Common myeloid progenitor, CD34-positive (primary cell): ENCODE measurements at regions of chr14 and their contacts with region 1.

Region 1: GRCh38 chr14:75361751-75362433 is 65.9 kb upstream of the JDP2 start:
- DNase-seq: peak in 2 of 3 donors; percentile 34 to 39
- H3K4me3 ChIP-seq: no peak overlapping the region
- H3K27ac ChIP-seq: no peak overlapping the region
- H3K4me1 ChIP-seq: peaks cover 3 to 20% (median 7%) of the 10 kb centered on the region in 4 experiments
- H3K27me3 ChIP-seq: no peaks in the 10 kb centered on the region

Region 2: GRCh38 chr14:74816124-74816523 is 545.8 kb before region 1 on chr14:
- CTCF ChIA-PET with region 1: no interaction called
- POLR2A ChIA-PET with region 1: no interaction called
- DNase-seq: no peak
- H3K4me3 ChIP-seq: no peak overlapping the region
- H3K27ac ChIP-seq: no peak overlapping the region
- H3K4me1 ChIP-seq: peaks cover 0 to 6% (median 0%) of the 10 kb centered on the region in 4 experiments
- H3K27me3 ChIP-seq: no peaks in the 10 kb centered on the region

Region 3: GRCh38 chr14:75176142-75176820 is 185.6 kb before region 1 on chr14 and contains the start of gene TMED10:
- CTCF ChIA-PET with region 1: no interaction called
- POLR2A ChIA-PET with region 1: no interaction called
- DNase-seq: peak; percentile 92 to 96 (median 96)
- H3K4me3 ChIP-seq: peak within 1 kb of the TSS; percentile 46 to 95 (median 89)
- H3K27ac ChIP-seq: peak within 1 kb of the TSS; percentile 99 to 100
- H3K4me1 ChIP-seq: peaks cover 0 to 19% (median 13%) of the 10 kb centered on the region in 4 experiments
- H3K27me3 ChIP-seq: no peaks in the 10 kb centered on the region

Region 4: DNA sequence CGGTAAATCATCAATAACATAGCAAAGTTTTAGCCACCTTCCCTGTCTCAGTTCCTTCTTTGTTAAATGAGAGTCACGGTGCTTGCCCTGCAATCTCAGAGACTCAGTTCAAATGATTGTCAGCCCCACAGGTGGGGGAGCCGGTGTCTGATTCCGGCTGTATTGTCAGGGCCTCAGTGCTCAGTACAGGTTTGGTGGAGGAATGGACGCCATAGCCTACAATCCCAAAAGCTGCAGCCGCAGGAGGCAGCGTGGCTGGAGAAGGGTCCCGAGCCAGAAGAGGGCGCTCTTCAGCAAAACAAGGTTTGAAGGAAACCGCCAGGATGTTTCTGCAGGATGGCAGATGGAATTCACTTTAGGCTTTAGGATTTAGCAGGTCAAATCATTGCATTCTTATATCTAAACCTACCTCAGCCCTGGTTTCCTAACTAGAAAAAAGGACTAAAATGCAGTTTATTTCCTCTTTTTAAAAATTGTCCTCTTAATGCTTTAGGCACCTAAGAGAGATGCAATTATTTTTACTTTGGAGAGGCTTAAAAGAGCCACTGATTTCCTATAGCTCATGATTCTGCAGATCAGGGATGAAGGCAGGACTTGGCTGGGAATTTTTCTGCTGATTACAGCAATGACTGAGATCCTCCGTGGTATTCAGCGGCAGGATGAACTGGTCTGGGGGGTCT is 54.1 kb before region 1 on chr14:
- CTCF ChIA-PET with region 1: no interaction called
- POLR2A ChIA-PET with region 1: no interaction called
- DNase-seq: peak; percentile 75 to 81 (median 75)
- H3K4me3 ChIP-seq: peak overlapping the region in 1 of 7 experiments; percentile 16
- H3K27ac ChIP-seq: no peak overlapping the region
- H3K4me1 ChIP-seq: peaks cover 0 to 15% (median 7%) of the 10 kb centered on the region in 4 experiments
- H3K27me3 ChIP-seq: no peaks in the 10 kb centered on the region

Region 5: DNA sequence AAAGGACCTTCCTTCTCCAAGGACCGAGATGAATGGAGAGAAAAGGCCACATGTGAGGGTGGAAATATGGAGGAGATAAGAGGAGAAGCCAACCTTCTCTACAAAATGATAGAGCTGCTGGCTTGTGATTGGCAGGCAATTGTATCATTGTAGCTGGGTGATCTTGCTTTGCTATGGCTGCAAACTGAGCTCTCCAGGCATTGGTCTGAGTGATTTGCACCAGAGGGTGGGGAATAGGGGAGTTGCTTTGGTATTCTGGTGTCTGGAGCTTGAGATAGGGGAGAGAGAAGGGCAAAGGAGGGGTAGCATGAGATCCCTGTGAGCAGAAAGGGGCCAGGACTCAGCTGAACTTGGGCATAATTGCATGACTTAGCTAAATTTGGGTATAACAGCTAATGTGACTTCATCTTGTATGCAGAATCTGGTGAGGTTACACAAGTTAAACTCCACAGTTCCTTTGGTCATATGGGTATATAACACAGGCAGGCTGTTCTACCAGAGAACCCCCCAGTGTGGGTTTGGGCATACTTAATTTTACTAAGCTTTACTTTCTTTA is 11.3 kb before region 1 on chr14:
- CTCF ChIA-PET with region 1: interaction called, 16 read pairs
- POLR2A ChIA-PET with region 1: no interaction called
- DNase-seq: peak; percentile 68 to 90 (median 77)
- H3K4me3 ChIP-seq: no peak overlapping the region
- H3K27ac ChIP-seq: no peak overlapping the region
- H3K4me1 ChIP-seq: peaks cover 0 to 5% (median 0%) of the 10 kb centered on the region in 4 experiments
- H3K27me3 ChIP-seq: no peaks in the 10 kb centered on the region